Activated CD8-positive, alpha-beta memory T cell treated with anti-CD3 and anti-CD28 coated beads, Interleukin-2, amount 10 ng/mL, durations not matched to agents 7 days and 5 days (primary cell): ENCODE measurements at regions of chr14 and their contacts with region 1.

Region 1: DNA sequence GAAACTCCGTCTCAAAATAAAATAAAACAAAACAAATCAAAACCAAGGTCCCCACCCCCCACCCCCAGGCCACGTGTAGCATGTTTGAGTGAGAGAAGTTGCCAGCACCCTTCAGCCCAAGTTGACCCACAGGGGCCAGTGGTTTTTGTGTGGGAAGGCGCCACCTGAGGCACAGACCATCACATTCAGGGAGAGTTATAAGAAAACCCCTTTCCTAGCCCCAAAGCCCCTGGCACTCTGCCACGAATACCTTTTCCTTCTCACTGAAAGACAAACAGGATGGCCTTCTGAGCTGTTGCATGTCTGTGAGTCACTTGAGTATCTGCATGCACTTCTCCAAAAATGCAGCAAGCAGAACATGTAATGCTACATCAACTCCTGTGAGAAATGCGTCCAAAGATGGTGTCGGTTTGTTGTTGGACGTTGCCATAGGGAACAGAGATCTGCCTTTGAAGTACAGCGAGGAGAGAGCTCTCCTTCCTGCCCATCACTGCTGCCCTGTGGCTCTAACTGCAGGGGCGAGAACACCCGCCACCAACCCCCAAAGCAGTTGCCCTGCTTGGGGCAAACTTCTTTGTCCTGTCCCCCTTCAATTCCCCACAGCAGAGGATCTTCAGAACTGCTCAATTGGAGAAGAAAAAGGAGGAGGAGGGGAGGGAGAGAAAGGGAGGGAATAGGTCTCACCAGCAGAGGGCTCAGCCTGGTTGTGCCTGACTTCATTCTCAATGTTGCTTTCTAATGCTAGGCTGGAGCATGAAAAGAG is 2.7 kb upstream of the TRAF3 start:
- DNase-seq: peak; percentile 74
- ATAC-seq: peak; percentile 37
- H3K4me3 Mint-ChIP-seq: no peak overlapping the region
- H3K27ac Mint-ChIP-seq: peak overlapping the region; percentile 82
- H3K4me1 Mint-ChIP-seq: peaks cover 36% of the 10 kb centered on the region
- H3K27me3 Mint-ChIP-seq: no peaks in the 10 kb centered on the region

Region 2: GRCh38 chr14:102748806-102749205 is 25.8 kb before region 1 on chr14:
- CTCF ChIA-PET with region 1: no interaction called
- DNase-seq: no peak
- ATAC-seq: no peak
- H3K4me3 Mint-ChIP-seq: no peak overlapping the region
- H3K27ac Mint-ChIP-seq: no peak overlapping the region
- H3K4me1 Mint-ChIP-seq: no peaks in the 10 kb centered on the region
- H3K27me3 Mint-ChIP-seq: no peaks in the 10 kb centered on the region

Region 3: GRCh38 chr14:102795060-102795925 is 20.7 kb after region 1 on chr14:
- CTCF ChIA-PET with region 1: no interaction called
- DNase-seq: peak; percentile 74
- ATAC-seq: peak; percentile 94
- H3K4me3 Mint-ChIP-seq: no peak overlapping the region
- H3K27ac Mint-ChIP-seq: peak overlapping the region; percentile 84
- H3K4me1 Mint-ChIP-seq: peaks cover 53% of the 10 kb centered on the region
- H3K27me3 Mint-ChIP-seq: no peaks in the 10 kb centered on the region

Region 4: DNA sequence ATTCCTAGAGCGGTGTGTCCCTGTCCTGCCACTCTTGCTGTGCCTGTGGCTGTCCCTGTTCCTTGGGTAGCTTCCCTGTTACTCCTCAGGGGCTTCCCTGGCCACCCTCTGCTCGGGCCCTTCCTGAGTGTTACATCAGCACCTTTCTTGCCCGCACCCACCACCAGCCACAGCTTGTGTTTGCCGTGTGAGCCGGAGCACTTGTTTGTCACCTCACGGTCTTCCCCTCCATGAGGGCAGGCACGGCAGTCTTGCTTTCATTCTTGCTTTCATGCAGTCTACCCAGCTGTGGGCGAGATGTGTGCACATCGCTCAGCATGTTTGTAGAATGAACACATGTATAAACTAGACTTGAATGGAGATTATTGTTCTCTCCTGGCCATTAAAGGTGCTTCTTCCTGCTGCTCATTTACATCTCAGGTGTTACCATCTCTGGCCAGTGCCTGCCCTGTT is 44.6 kb after region 1 on chr14:
- CTCF ChIA-PET with region 1: interaction called, 12 read pairs
- DNase-seq: peak; percentile 89
- ATAC-seq: peak; percentile 87
- H3K4me3 Mint-ChIP-seq: peak overlapping the region; percentile 73
- H3K27ac Mint-ChIP-seq: peak overlapping the region; percentile 92
- H3K4me1 Mint-ChIP-seq: peaks cover 79% of the 10 kb centered on the region
- H3K27me3 Mint-ChIP-seq: no peaks in the 10 kb centered on the region